Heart left ventricle (tissue), 16 donors: ENCODE measurements at regions of chr19 and their contacts with region 1.

Region 1: DNA sequence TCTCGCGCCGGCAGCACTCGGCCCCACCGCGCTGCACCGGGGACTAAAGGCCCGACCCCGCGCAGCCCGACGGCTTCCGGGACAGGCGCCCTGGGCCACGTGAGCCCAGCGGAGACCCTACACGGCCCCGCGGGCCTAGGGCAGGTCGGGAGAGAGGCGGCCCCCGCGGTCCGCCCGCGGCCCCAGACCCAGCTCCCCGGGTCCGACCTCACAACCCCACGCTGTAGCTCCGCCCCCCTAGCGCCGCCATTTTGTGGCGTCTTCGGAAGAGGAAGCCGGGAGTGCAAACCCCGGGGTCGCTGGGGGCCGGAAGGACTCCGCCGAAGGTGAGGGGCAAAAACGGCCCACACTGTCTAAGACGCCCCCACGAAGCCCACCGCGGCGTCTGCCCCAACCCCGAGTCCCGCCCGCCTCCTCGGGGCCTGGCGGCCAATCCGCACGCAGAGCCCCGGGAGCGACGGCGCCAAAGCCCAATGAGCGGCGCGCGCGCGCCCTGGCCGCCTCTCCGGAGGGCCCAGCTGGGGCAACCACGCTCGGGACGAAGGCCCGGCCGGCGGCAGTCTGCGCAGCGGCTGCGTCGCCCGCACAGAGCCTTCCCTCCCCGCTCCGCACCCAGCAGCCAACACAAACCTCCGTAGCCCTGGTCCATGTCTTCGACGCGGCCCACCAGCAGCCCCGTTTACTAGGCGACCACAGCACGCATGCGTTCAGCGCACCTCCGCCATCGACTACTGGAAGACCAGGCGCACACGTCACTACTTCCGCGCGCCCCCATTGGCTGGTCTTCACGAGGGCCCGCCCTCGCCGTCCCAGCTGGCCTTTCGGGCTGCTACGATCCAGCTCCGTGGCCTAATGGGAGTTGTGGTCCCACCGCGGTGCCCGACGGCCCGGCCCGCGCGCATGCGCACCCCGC is at the start of gene AKAP8:
- DNase-seq: peak; percentile 98 to 99 (median 99)
- ATAC-seq: peak; percentile 95 to 97 (median 96)
- H3K4me3 ChIP-seq: peak within 1 kb of the TSS; percentile 71 to 99 (median 90)
- H3K27ac ChIP-seq: peak within 1 kb of the TSS; percentile 90 to 99 (median 97)
- H3K4me1 ChIP-seq: peaks cover 15 to 52% (median 45%) of the 10 kb centered on the region in 12 donors
- H3K27me3 ChIP-seq: no peaks in the 10 kb centered on the region
- CTCF ChIP-seq: no peak
- POLR2A ChIP-seq: peak; percentile 32 to 82
- total RNA-seq, gene AKAP8: 15.3 to 24.8 (median 18.9) TPM

Region 2: DNA sequence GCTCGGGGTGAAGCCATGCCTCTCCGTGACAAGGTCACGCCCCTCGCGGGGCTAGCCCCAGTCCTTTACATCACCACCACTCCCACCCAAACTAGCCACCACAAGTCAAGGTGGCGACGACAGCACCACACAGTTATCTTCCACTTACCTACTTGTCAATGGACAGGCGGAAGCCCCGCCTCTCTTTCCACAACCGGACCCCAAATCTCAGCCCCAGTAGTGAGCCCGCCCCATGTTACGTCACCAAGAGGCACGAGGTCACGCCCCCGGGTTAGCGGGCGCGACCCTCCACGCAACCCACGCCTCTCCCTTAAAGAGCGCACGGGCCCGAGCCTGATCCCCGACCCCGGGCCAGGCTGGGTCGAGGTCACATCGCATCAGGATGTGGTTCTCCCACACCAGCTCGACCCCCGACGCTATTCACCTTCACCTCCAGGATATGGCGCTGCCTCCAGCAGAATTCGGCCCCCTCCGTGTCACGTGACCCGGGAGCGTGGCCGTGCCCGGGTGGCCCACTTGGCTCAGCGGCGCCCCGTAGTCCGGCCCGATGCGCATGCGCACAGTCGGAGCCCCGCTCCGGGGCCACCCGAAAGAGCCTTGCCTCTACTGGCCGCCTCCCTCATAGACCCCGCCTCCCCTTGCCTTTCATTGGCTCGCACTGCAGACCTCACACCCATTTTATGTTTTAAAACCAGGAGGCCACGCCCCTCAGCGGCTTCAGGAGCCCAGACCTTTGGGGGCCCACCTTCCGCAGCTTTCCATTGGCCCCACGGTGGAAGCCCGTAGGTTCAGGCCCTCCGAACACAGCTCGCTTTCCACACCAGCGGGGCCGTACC is 253.9 kb before region 1 on chr19:
- intact Hi-C with region 1: loop called in 1 of 10 experiments (anchors 5 kb)
- DNase-seq: peak; percentile 98 to 99 (median 99)
- ATAC-seq: peak; percentile 91 to 93 (median 92)
- H3K4me3 ChIP-seq: peak overlapping the region; percentile 35 to 93 (median 72)
- H3K27ac ChIP-seq: peak overlapping the region; percentile 92 to 99 (median 96)
- H3K4me1 ChIP-seq: peaks cover 0 to 30% (median 16%) of the 10 kb centered on the region in 12 donors
- H3K27me3 ChIP-seq: no peaks in the 10 kb centered on the region
- CTCF ChIP-seq: peak in 3 of 12 donors; percentile 11 to 15 (median 15)
- POLR2A ChIP-seq: peak in 1 of 2 donors; percentile 50

Region 3: GRCh38 chr19:15264061-15264932 is 115.0 kb before region 1 on chr19:
- intact Hi-C with region 1: loop called in 5 of 10 experiments (anchors 5 to 10 kb)
- DNase-seq: peak; percentile 70 to 86 (median 75)
- ATAC-seq: peak in 3 of 4 donors; percentile 24 to 46 (median 25)
- H3K4me3 ChIP-seq: no peak overlapping the region
- H3K27ac ChIP-seq: peak overlapping the region in 11 of 12 donors; percentile 3 to 84 (median 55)
- H3K4me1 ChIP-seq: peaks cover 3 to 59% (median 52%) of the 10 kb centered on the region in 12 donors
- H3K27me3 ChIP-seq: no peaks in the 10 kb centered on the region
- CTCF ChIP-seq: peak; percentile 68 to 85 (median 78)
- POLR2A ChIP-seq: no peak

Region 4: GRCh38 chr19:15332311-15332996 is 46.9 kb before region 1 on chr19 and contains the start of gene BRD4:
- intact Hi-C with region 1: loop called in 3 of 10 experiments (anchors 5 kb)
- DNase-seq: peak; percentile 74 to 88 (median 84)
- ATAC-seq: peak; percentile 22 to 84 (median 80)
- H3K4me3 ChIP-seq: peak within 1 kb of the TSS; percentile 73 to 99 (median 96)
- H3K27ac ChIP-seq: peak within 1 kb of the TSS; percentile 84 to 97 (median 92)
- H3K4me1 ChIP-seq: peaks cover 6 to 67% (median 54%) of the 10 kb centered on the region in 12 donors
- H3K27me3 ChIP-seq: no peaks in the 10 kb centered on the region
- CTCF ChIP-seq: no peak
- POLR2A ChIP-seq: no peak
- total RNA-seq, gene BRD4: 31.4 to 78.9 (median 61.8) TPM

Region 5: DNA sequence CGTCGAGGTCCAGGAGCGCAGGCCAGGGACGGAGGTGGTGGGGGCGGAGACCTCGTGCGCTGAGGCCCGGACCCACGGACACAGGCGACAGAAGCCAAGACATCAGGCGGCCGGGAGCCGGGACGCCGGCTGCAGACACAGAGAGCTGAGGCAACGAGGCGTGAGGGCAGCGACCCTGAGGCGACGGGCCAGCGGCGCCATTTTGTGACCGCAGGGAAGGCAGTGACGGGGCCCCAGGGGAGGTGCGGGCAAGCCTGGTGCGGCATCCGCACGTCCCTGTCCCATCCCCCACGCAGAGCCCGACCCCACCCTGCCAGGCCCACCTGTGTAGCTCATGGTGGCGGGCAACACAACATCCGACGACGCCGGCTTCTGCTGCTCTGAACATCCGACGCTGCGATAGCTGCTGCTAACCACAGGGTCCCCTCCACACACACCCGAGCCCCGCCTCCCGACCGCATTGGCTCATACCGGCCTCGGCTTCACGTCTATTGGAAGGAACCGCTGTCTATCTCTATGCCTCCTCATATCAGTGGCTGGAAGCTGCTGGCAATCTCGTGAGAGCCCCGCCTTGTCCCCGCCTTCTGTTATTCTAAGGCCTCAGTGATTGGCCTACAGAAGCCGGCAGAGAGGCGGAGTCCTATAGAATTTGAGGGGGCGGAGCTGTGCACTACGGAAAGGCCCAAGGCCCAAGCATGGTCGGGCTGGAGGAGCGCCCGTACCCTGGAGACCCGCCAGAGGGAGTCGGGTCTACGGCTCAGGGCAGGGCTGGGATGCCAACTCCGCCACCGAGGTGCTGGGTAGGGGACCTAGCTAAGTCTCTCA is 39.5 kb after region 1 on chr19 and contains the start of gene AKAP8L:
- intact Hi-C with region 1: loop called in 6 of 10 experiments (anchors 5 kb)
- DNase-seq: peak; percentile 98 to 100 (median 99)
- ATAC-seq: peak; percentile 95 to 98 (median 96)
- H3K4me3 ChIP-seq: peak within 1 kb of the TSS; percentile 75 to 100 (median 93)
- H3K27ac ChIP-seq: peak within 1 kb of the TSS; percentile 71 to 95 (median 91)
- H3K4me1 ChIP-seq: peaks cover 6 to 58% (median 39%) of the 10 kb centered on the region in 12 donors
- H3K27me3 ChIP-seq: no peaks in the 10 kb centered on the region
- CTCF ChIP-seq: peak; percentile 50 to 81 (median 63)
- POLR2A ChIP-seq: peak; percentile 53 to 91
- total RNA-seq, gene AKAP8L: 46.5 to 72.2 (median 60.1) TPM

Region 6: DNA sequence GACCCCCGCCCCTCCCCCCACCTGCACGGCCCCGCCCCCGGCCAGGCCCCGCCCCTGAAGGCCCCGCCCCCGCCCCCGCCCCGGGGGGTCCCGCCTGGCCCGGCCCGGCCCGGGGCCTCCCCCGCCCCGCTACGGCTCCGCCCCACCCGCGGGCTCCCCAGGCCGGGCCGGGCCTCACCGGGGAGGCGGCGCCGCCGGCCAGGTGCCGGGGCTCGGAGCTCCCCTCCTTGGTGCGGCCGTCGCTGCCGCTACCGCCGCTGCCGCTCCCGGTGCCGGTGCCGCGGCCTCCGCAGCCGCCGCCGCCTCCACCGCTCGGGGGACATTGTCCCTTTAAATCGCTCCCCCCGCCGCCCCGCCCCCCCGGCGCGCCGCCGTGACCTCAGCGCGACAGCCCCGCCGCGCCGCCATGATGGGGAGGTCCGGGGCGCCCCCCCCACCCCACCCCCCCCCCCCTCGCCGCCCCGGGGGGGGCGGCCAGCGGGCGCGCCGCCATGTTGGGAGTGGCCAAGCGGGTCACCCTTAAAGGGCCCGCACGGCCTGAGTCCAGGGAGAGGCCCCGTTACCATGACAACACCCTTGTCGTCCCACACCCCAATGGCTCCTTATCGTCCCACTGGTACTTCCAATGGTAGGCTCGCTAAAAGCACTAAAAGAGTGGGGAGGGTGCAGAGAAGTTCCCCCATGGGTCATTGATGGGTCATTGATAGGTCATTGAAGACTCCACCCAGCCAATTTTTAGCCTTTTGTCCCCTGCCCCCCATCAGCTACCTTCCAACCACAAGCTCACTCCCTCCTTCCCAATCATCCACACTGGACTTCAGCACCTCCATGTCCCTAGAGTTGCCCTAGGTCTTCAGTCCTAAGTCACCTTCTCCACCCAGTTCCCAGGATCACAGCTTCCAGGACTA is 70.5 kb after region 1 on chr19 and contains the start of gene WIZ:
- intact Hi-C with region 1: loop called in 3 of 10 experiments (anchors 2 to 5 kb)
- DNase-seq: peak; percentile 88 to 94 (median 89)
- ATAC-seq: peak; percentile 5 to 41 (median 21)
- H3K4me3 ChIP-seq: peak within 1 kb of the TSS; percentile 65 to 95 (median 74)
- H3K27ac ChIP-seq: peak within 1 kb of the TSS; percentile 67 to 94 (median 86)
- H3K4me1 ChIP-seq: peaks cover 3 to 43% (median 20%) of the 10 kb centered on the region in 12 donors
- H3K27me3 ChIP-seq: peaks cover 0 to 9% (median 3%) of the 10 kb centered on the region in 9 donors
- CTCF ChIP-seq: no peak
- POLR2A ChIP-seq: peak in 1 of 2 donors; percentile 21
- total RNA-seq, gene WIZ: 23.1 to 52.4 (median 25.7) TPM